PC-9 (cell line): ENCODE measurements at regions of chr3 and their contacts with region 1.

Region 1: GRCh38 chr3:155744626-155745324 is at the start of gene PLCH1:
- DNase-seq: peak in 1 of 2 experiments; percentile 68
- H3K4me3 ChIP-seq: peak within 1 kb of the TSS; percentile 85
- H3K27ac ChIP-seq: no peak within 1 kb of the TSS
- H3K4me1 ChIP-seq: peaks cover 33% of the 10 kb centered on the region
- H3K27me3 ChIP-seq: no peaks in the 10 kb centered on the region
- CTCF ChIP-seq: no peak
- total RNA-seq, gene PLCH1: 0.73 and 1.4 TPM in 2 replicates

Region 2: GRCh38 chr3:155676252-155676981 is 68.4 kb before region 1 on chr3:
- CTCF ChIA-PET with region 1: no interaction called
- POLR2A ChIA-PET with region 1: interaction called, 13 read pairs
- intact Hi-C with region 1: no loop called
- DNase-seq: peak in 1 of 2 experiments; percentile 11
- H3K4me3 ChIP-seq: no peak overlapping the region
- H3K27ac ChIP-seq: no peak overlapping the region
- H3K4me1 ChIP-seq: no peaks in the 10 kb centered on the region
- H3K27me3 ChIP-seq: no peaks in the 10 kb centered on the region
- CTCF ChIP-seq: no peak

Region 3: GRCh38 chr3:155791190-155791589 is 46.4 kb after region 1 on chr3:
- CTCF ChIA-PET with region 1: no interaction called
- POLR2A ChIA-PET with region 1: no interaction called
- intact Hi-C with region 1: no loop called
- DNase-seq: no peak
- H3K4me3 ChIP-seq: no peak overlapping the region
- H3K27ac ChIP-seq: no peak overlapping the region
- H3K4me1 ChIP-seq: no peaks in the 10 kb centered on the region
- H3K27me3 ChIP-seq: no peaks in the 10 kb centered on the region
- CTCF ChIP-seq: no peak

Region 4: DNA sequence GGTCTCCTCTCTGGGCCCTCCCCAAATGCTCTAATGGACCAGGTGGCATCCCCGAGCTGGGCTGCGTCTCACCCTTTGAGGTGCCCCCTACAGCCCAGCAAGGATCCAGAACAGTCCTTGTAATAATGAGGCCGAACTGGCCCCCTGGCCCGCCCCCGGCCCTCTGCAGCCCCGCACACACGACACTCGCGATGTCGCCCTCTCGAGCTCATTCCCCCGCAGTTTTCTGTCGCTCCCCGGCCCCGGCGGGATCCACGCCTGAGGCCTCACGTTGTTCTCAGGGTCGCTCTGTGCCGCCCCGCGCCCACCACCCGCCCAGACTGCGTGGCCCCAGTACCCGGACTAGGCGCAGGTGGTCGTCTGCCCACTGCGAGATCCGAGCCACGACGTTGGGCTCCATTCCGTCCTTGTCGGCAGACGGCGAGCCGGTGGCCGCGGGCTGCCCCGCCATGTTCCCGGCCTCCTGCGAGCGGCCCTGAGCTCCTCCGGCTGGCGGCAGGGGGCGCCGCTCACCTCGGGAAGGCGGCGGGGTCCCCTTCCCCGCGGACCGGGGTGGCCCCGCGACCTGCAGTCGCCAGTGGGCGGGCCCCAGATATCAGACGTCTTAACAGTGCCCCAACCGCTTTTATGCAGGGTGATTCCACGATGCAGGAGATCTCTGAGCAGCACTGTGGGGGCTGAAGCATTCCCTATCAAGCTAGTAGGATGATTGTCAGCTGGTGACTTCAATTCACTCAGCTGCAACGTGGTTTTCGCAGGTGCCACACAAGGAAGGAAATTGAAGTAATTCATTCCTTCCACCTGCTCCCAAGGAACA is 61.2 kb after region 1 on chr3 and contains the start of gene C3orf33:
- CTCF ChIA-PET with region 1: no interaction called
- POLR2A ChIA-PET with region 1: no interaction called
- intact Hi-C with region 1: loop called (anchors 10 kb)
- DNase-seq: peak; percentile 64 to 79
- H3K4me3 ChIP-seq: peak within 1 kb of the TSS; percentile 91
- H3K27ac ChIP-seq: no peak within 1 kb of the TSS
- H3K4me1 ChIP-seq: peaks cover 5% of the 10 kb centered on the region; the same call in 1 of the 2 replicates
- H3K27me3 ChIP-seq: no peaks in the 10 kb centered on the region
- CTCF ChIP-seq: peak; percentile 92
- total RNA-seq, gene C3orf33: 1.1 and 2.3 TPM in 2 replicates

Region 5: GRCh38 chr3:155854141-155854940 is 109.6 kb after region 1 on chr3 and contains the start of gene SLC33A1:
- CTCF ChIA-PET with region 1: no interaction called
- POLR2A ChIA-PET with region 1: no interaction called
- intact Hi-C with region 1: loop called (anchors 2 kb)
- DNase-seq: peak; percentile 99
- H3K4me3 ChIP-seq: peak within 1 kb of the TSS; percentile 84
- H3K27ac ChIP-seq: peak within 1 kb of the TSS; percentile 99
- H3K4me1 ChIP-seq: peaks cover 33% of the 10 kb centered on the region
- H3K27me3 ChIP-seq: no peaks in the 10 kb centered on the region
- CTCF ChIP-seq: no peak
- total RNA-seq, gene SLC33A1: 22.4 and 28.6 TPM in 2 replicates

Region 6: GRCh38 chr3:155870133-155870944 is 125.6 kb after region 1 on chr3 and contains the start of gene GMPS:
- CTCF ChIA-PET with region 1: no interaction called
- POLR2A ChIA-PET with region 1: interaction called, 7 read pairs
- intact Hi-C with region 1: loop called (anchors 5 kb)
- DNase-seq: peak; percentile 84 to 99
- H3K4me3 ChIP-seq: peak within 1 kb of the TSS; percentile 91
- H3K27ac ChIP-seq: peak within 1 kb of the TSS; percentile 79
- H3K4me1 ChIP-seq: peaks cover 21% of the 10 kb centered on the region
- H3K27me3 ChIP-seq: no peaks in the 10 kb centered on the region
- CTCF ChIP-seq: peak; percentile 58
- total RNA-seq, gene GMPS: 116 and 139 TPM in 2 replicates